GM10248 (cell line): ENCODE measurements at regions of chr16 and their contacts with region 1.

Region 1: DNA sequence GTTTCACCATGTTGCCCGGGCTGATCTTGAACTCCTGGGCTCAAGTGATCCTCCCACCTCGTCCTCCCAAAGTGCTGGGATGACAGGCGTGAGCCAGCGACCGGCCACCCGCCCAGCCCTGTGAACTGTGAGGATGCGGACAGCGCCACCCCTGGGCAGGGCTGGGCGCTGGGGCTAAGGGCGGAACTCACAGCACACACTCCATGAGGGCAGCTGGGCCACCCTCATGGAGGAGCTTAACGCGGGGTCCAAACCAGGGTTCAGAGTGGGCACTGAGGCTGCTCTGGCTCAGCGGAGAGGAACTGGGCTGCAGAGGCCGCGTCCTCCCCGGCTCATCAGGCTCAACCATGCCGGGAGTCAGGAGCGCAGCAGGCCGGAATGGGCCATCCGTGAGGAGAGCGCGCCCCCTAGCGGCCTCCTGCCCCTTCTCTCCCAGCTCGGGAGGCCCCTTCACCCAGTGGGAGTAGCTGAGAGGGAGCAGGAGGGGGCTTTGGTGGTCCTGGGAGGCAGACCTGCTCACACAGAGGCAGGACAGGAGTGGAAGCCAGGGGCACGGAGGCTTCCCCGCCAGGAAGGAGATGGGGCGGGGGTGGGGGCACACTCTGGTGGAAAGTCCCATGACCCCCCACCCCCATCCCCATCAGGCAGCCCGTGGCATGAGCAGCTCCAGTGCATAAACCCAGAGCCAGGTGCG is 13.8 kb downstream of the CORO7 start:
- DNase-seq: peak; percentile 90
- CTCF ChIP-seq: peak; percentile 97

Region 2: GRCh38 chr16:4280625-4281024 is 122.0 kb before region 1 on chr16:
- CTCF ChIA-PET with region 1: no interaction called
- POLR2A ChIA-PET with region 1: no interaction called
- DNase-seq: no peak
- CTCF ChIP-seq: no peak

Region 3: GRCh38 chr16:4330277-4330874 is 72.2 kb before region 1 on chr16:
- CTCF ChIA-PET with region 1: interaction called, 25 read pairs
- POLR2A ChIA-PET with region 1: no interaction called
- DNase-seq: peak; percentile 89
- CTCF ChIP-seq: peak; percentile 95

Region 4: GRCh38 chr16:4358831-4359561 is 43.6 kb before region 1 on chr16:
- CTCF ChIA-PET with region 1: interaction called, 64 read pairs
- POLR2A ChIA-PET with region 1: no interaction called
- DNase-seq: peak; percentile 78
- CTCF ChIP-seq: peak; percentile 80

Region 5: DNA sequence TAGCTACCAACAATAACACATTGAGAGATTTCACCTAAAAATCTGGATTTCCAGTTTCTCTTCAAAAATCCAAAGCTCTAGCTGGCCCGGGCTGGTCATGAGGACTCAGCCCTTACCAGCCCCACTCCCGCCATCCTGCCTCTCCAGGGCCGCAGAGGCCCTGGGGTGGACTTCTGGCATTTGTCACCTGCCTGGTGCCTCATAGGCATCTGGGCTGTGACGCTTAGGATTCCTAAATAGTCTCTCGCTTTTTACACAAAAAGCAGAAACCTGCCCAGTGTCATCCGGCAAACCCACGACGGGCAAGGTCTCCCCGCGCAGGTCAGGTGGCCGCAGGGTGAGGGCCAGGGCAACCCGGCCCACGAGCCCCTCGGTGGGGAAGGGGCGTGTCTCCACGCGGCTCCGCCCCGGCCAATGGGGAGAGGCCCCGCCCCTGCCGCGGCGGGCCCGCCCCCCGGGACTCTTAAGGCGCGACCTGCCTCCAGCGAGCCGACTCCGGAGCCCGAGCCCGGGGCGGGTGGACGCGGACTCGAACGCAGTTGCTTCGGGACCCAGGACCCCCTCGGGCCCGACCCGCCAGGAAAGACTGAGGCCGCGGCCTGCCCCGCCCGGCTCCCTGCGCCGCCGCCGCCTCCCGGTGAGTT is 31.1 kb before region 1 on chr16 and contains the start of gene VASN:
- CTCF ChIA-PET with region 1: interaction called, 21 read pairs
- POLR2A ChIA-PET with region 1: no interaction called
- DNase-seq: peak; percentile 91
- CTCF ChIP-seq: no peak